ENCODE measurements at regions of chr14 and their contacts with region 1.

Region 1: DNA sequence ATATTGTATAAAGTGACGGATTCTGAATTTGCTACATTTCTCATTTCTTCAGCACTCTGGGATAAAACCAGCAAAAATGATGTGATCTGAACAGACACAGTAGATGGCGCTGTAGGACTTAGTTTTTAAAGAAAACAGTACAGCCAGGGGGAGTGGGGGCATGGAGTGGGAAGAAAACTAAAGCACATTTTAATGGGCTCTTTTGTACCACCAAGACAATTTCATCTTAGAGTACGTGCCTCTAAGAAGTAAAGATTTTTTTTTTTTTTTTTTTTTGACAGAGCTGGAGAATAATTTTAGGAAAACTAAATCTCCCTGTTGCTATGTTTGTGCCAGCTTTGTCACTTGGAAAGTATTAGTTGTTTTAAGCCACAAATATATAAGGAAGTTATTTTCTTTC is 124.4 kb downstream of the RAD51B start:
- DNase-seq: no peak
- ATAC-seq: peak; percentile 78 to 89 (median 84)
- H3K4me3 ChIP-seq: no peak overlapping the region
- H3K27ac ChIP-seq: no peak overlapping the region
- H3K4me1 ChIP-seq: peaks cover 41% of the 10 kb centered on the region
- H3K27me3 ChIP-seq: no peaks in the 10 kb centered on the region
- CTCF ChIP-seq: peak; percentile 75

Region 2: DNA sequence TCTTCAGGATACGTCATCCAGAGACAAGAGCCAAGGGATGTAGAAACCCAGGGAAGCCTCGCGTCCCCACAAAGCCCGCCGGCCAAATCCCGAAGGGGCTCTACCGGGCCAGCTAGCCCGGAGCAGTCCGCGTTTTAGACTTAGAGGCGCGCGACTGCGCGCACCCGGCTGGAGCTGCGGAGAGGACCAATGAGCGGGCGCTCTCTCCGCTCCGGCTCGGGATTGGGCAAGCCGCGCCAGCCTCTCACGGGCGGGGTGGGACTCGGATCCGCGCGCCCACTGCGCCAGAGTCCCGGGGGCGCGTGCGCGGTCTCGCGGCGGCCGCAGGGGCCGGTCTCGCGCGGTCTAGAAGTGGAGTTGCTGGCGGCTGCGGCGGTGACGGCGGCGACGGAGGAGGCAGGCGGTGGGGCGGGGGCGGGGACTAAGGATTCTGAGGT is 703.0 kb before region 1 on chr14:
- intact Hi-C with region 1: no loop called
- DNase-seq: peak; percentile 98 to 99
- ATAC-seq: peak; percentile 94 to 98 (median 97)
- H3K4me3 ChIP-seq: peak overlapping the region; percentile 100
- H3K27ac ChIP-seq: peak overlapping the region; percentile 100
- H3K4me1 ChIP-seq: peaks cover 5% of the 10 kb centered on the region
- H3K27me3 ChIP-seq: no peaks in the 10 kb centered on the region
- CTCF ChIP-seq: no peak

Region 3: DNA sequence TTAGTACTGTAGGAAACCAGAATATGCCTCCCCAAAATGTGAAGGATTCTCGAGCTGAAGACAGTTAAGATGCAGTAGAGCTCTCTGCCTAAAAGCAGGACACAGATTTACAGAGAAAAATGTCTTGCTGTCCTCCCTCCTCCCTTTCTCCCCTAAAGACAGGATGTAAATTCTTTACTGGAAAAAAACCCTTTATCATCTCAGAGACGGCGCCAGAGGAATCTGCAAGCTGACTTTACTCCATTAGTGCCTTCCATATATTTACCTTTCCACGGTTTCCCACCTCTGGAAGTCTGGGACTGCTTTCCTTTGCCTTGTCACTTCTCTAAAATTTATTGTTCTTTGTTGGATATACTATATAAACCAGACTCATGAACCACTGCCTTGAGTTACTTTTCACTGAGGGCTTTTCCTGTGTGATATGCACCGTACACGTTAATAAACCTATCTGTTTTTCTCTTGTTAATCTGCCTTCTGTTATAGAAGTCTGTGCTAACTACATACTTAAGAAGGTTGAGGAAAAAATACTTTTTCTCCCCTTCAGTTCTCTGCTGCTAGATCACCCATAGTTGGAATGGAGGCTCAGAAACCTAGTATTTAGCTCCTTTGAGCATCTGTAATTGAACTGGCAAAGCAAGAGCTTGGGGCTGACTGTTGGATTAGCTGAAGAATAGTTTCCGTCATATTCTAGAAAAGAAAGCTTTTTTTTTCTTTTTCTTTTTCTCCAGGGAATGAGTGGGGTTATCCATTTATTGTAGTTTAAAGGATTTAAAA is 24.5 kb before region 1 on chr14:
- intact Hi-C with region 1: no loop called
- DNase-seq: no peak
- ATAC-seq: no peak
- H3K4me3 ChIP-seq: no peak overlapping the region
- H3K27ac ChIP-seq: no peak overlapping the region
- H3K4me1 ChIP-seq: no peaks in the 10 kb centered on the region
- H3K27me3 ChIP-seq: no peaks in the 10 kb centered on the region
- CTCF ChIP-seq: no peak

Region 4: DNA sequence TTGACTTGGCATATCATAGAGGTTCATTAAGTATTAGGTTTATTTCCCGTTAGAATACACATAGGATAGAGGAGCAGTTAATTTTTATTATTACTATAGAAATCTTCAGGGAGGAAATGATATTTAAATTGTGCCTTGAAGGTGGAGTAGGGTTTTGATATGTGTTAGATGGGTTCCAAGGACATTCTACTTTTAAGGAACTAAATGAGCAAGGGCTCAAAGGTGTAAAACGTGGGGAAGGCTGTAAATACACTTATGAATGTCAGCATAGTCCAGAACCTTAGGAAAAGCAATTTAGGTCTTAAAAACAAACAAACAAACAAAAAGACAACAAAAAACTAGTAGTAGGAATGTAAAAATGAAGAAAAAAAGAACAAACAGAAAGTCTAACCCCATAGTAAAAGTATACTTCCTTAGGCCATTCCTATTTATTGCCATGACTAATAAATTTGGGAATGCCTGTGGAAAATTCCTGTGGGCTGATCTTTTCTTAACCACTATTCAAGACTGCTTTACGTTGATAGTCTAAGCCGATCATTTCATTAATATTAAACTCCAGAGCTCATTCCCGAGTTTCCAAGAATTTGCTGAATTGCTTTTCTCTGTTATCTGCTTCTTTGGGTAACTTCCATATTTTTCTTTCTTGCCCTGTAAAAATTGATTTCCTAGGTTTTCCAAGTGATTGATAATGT is 55.9 kb after region 1 on chr14:
- intact Hi-C with region 1: no loop called
- DNase-seq: no peak
- ATAC-seq: peak; percentile 76 to 82 (median 80)
- H3K4me3 ChIP-seq: peak overlapping the region; percentile 16
- H3K27ac ChIP-seq: peak overlapping the region; percentile 53
- H3K4me1 ChIP-seq: peaks cover 10% of the 10 kb centered on the region
- H3K27me3 ChIP-seq: no peaks in the 10 kb centered on the region
- CTCF ChIP-seq: no peak

Region 5: DNA sequence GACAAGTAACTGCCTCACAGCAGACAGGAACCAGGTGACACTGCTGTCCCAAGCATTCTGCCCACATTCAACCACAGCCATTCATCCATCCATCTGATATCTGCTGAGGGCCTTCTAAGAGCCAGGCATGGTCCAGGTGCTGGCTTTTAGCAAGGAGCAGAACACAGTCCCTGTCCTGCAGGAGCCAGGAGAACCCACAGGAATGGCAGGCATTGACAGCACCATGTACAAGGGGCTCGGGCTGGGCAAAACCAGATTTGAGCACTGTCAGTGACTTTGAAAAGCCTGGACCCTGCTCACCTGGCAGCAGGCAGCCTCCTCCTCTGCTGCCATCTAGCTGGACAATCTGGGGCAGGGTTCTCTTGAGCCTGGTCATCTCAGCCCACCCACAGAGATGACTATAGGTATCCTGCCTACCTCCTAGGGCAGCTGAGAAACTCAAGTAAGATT is 712.0 kb after region 1 on chr14:
- intact Hi-C with region 1: loop called in 1 of 2 experiments (anchors 10 kb)
- DNase-seq: no peak
- ATAC-seq: peak; percentile 34 to 71 (median 68)
- H3K4me3 ChIP-seq: no peak overlapping the region
- H3K27ac ChIP-seq: no peak overlapping the region
- H3K4me1 ChIP-seq: peaks cover 17% of the 10 kb centered on the region
- H3K27me3 ChIP-seq: no peaks in the 10 kb centered on the region
- CTCF ChIP-seq: no peak

Region 6: GRCh38 chr14:68843471-68844209 is 899.7 kb after region 1 on chr14:
- intact Hi-C with region 1: loop called in 1 of 2 experiments (anchors 5 kb)
- DNase-seq: peak; percentile 76 to 88
- ATAC-seq: peak; percentile 87 to 97 (median 92)
- H3K4me3 ChIP-seq: peak overlapping the region; percentile 60
- H3K27ac ChIP-seq: peak overlapping the region; percentile 16
- H3K4me1 ChIP-seq: peaks cover 4% of the 10 kb centered on the region
- H3K27me3 ChIP-seq: no peaks in the 10 kb centered on the region
- CTCF ChIP-seq: peak; percentile 92